ENCODE measurements at regions of chr7 and their contacts with region 1.

Region 1: GRCh38 chr7:99938296-99938695 is 8.9 kb upstream of the GJC3 start:
- DNase-seq: no peak
- H3K4me3 ChIP-seq: no peak overlapping the region
- H3K27ac ChIP-seq: no peak overlapping the region
- H3K4me1 ChIP-seq: no peaks in the 10 kb centered on the region
- H3K27me3 ChIP-seq: no peaks in the 10 kb centered on the region
- CTCF ChIP-seq: no peak

Region 2: GRCh38 chr7:100034871-100035510 is 96.7 kb after region 1 on chr7:
- CTCF ChIA-PET with region 1: no interaction called
- dilution Hi-C with region 1: loop called (anchors 5 kb)
- in situ Hi-C with region 1: no loop called
- intact Hi-C with region 1: no loop called
- DNase-seq: no peak
- H3K4me3 ChIP-seq: no peak overlapping the region
- H3K27ac ChIP-seq: no peak overlapping the region
- H3K4me1 ChIP-seq: peaks cover under 1% of the 10 kb centered on the region
- H3K27me3 ChIP-seq: no peaks in the 10 kb centered on the region
- CTCF ChIP-seq: no peak

Region 3: DNA sequence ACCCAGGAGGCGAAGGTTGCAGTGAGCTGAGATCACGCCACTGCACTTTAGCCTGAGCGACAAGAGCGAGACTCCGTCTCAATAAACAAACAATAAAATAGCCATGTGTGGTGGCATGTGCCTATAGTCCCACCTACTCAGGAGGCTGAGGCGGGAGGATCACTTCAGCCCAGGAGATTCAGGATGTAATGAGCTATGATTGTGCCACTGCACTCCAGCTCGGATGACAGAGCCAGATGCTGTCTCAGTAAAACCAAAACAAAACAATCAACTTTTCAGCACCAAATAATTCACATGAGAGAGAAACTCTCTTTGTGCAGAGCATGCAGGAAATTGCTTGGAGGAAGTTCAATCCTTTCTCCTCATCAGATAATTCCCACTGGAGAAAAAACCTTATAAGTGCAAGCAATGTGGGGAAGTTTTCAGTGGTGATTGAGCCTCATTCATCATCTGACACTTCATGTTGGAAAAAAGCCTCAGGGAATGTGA is 1320.0 kb after region 1 on chr7:
- CTCF ChIA-PET with region 1: no interaction called
- dilution Hi-C with region 1: no loop called
- in situ Hi-C with region 1: no loop called
- intact Hi-C with region 1: no loop called
- DNase-seq: no peak
- H3K4me3 ChIP-seq: no peak overlapping the region
- H3K27ac ChIP-seq: no peak overlapping the region
- H3K4me1 ChIP-seq: no peaks in the 10 kb centered on the region
- H3K27me3 ChIP-seq: no peaks in the 10 kb centered on the region
- CTCF ChIP-seq: no peak